ENCODE measurements at regions of chr13 and their contacts with region 1.

Region 1: GRCh38 chr13:30617315-30618185 is at the start of gene USPL1:
- DNase-seq: peak; percentile 92 to 99 (median 99)
- ATAC-seq: peak; percentile 95
- H3K4me3 ChIP-seq: peak within 1 kb of the TSS; percentile 84
- H3K4me3 Mint-ChIP-seq: no peak within 1 kb of the TSS
- H3K27ac ChIP-seq: peak within 1 kb of the TSS; percentile 97
- H3K27ac Mint-ChIP-seq: no peak within 1 kb of the TSS
- H3K4me1 ChIP-seq: peaks cover 11 to 13% of the 10 kb centered on the region in 2 donors
- H3K4me1 Mint-ChIP-seq: peaks cover 13 to 53% (median 36%) of the 10 kb centered on the region in 7 donors
- H3K27me3 ChIP-seq: no peaks in the 10 kb centered on the region
- H3K27me3 Mint-ChIP-seq: no peaks in the 10 kb centered on the region
- total RNA-seq, gene USPL1: 22.4 to 34.7 (median 30.4) TPM

Region 2: GRCh38 chr13:29595380-29596063 is 1022.0 kb before region 1 on chr13 and contains the start of gene SLC7A1:
- CTCF ChIA-PET with region 1: no interaction called
- POLR2A ChIA-PET with region 1: no interaction called
- intact Hi-C with region 1: loop called (anchors 1 kb)
- DNase-seq: peak; percentile 74 to 93 (median 85)
- ATAC-seq: peak; percentile 95
- H3K4me3 ChIP-seq: peak within 1 kb of the TSS; percentile 73
- H3K4me3 Mint-ChIP-seq: peak within 1 kb of the TSS; percentile 88 to 94 (median 90)
- H3K27ac ChIP-seq: peak within 1 kb of the TSS; percentile 82
- H3K27ac Mint-ChIP-seq: peak within 1 kb of the TSS; percentile 74 to 96 (median 87)
- H3K4me1 ChIP-seq: peaks cover 6 to 7% of the 10 kb centered on the region in 2 donors
- H3K4me1 Mint-ChIP-seq: peaks cover 26 to 49% (median 43%) of the 10 kb centered on the region in 7 donors
- H3K27me3 ChIP-seq: no peaks in the 10 kb centered on the region
- H3K27me3 Mint-ChIP-seq: peaks cover 0 to 3% (median 2%) of the 10 kb centered on the region in 5 donors
- total RNA-seq, gene SLC7A1: 12.2 to 63.8 (median 28.2) TPM

Region 3: DNA sequence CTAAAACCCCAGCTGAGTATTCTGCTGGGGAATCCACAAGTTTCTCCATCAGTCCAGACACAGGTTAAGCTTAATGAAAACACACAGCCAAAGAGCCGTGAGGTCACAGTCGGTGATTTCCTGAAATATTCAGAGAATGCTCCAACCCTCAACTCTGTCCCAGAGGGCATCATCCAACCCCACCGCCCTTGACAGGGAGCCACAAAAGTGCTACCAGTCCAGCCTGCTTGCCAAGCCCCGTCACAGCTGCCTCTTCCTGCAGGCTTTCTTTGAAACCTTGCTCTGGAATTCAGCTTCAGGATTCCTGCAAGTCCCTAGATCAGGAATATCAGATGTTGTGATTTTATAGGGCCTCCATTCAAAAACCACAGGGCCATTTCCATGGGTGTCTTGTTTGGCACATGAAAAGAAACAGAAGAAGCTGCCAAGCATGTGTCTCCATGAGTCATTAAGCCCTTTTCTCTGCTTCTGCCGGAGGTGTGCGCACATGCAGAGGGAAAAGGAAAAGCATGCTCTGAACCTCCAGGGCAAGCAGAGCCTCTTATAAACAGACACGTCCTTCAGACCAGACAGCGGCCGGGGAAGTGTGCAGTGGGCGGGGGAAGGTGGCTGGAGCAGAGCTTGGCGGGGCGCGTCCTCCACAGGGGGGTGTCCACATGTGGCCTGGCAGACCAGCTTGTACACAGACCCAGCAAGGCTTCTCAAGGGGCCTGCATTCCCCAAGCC is 474.9 kb before region 1 on chr13:
- CTCF ChIA-PET with region 1: no interaction called
- POLR2A ChIA-PET with region 1: interaction called, 8 read pairs
- intact Hi-C with region 1: loop called in 1 of 2 experiments (anchors 5 kb)
- DNase-seq: peak in 1 of 9 donors; percentile 49
- ATAC-seq: peak; percentile 41
- H3K4me3 ChIP-seq: no peak overlapping the region
- H3K4me3 Mint-ChIP-seq: peak overlapping the region in 4 of 10 donors; percentile 10 to 61 (median 29)
- H3K27ac ChIP-seq: no peak overlapping the region
- H3K27ac Mint-ChIP-seq: peak overlapping the region; percentile 45 to 93 (median 76)
- H3K4me1 ChIP-seq: peaks cover 25 to 47% of the 10 kb centered on the region in 2 donors
- H3K4me1 Mint-ChIP-seq: peaks cover 29 to 64% (median 60%) of the 10 kb centered on the region in 7 donors
- H3K27me3 ChIP-seq: no peaks in the 10 kb centered on the region
- H3K27me3 Mint-ChIP-seq: peaks cover 0 to 5% (median 0%) of the 10 kb centered on the region in 5 donors

Region 4: GRCh38 chr13:30408319-30409101 is 209.0 kb before region 1 on chr13:
- CTCF ChIA-PET with region 1: no interaction called
- POLR2A ChIA-PET with region 1: interaction called, 3 read pairs
- intact Hi-C with region 1: loop called in 1 of 2 experiments (anchors 1 kb)
- DNase-seq: peak; percentile 78 to 89 (median 85)
- ATAC-seq: peak; percentile 97
- H3K4me3 ChIP-seq: peak overlapping the region; percentile 44
- H3K4me3 Mint-ChIP-seq: peak overlapping the region; percentile 64 to 78 (median 72)
- H3K27ac ChIP-seq: peak overlapping the region; percentile 52
- H3K27ac Mint-ChIP-seq: peak overlapping the region; percentile 51 to 87 (median 83)
- H3K4me1 ChIP-seq: peaks cover 9 to 14% of the 10 kb centered on the region in 2 donors
- H3K4me1 Mint-ChIP-seq: peaks cover 6 to 46% (median 37%) of the 10 kb centered on the region in 7 donors
- H3K27me3 ChIP-seq: no peaks in the 10 kb centered on the region
- H3K27me3 Mint-ChIP-seq: peaks cover 0 to 12% (median 0%) of the 10 kb centered on the region in 5 donors

Region 5: DNA sequence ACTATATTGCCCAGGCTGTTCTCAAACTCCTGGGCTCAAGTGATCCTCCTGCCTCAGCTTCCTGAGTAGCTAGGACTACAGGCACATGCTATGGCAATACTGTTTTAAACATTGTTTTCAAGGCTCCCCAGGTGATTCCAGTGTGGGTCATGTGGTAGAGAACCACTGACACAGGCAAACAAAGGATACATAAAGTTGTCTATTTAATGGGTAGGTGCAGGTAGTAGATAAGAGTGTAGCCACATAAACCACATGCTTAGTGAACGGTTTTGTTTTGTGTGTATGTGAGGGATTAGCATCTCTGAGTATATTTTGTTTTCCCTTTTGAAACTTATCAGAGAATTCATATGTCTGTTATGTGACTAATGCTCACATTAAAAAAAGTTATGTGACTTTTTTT is 36.9 kb after region 1 on chr13:
- CTCF ChIA-PET with region 1: no interaction called
- POLR2A ChIA-PET with region 1: no interaction called
- intact Hi-C with region 1: loop called in 1 of 2 experiments (anchors 1 kb)
- DNase-seq: no peak
- ATAC-seq: peak; percentile 76
- H3K4me3 ChIP-seq: no peak overlapping the region
- H3K4me3 Mint-ChIP-seq: peak overlapping the region in 2 of 10 donors; percentile 6 to 82
- H3K27ac ChIP-seq: no peak overlapping the region
- H3K27ac Mint-ChIP-seq: peak overlapping the region in 8 of 9 donors; percentile 17 to 93 (median 57)
- H3K4me1 ChIP-seq: peaks cover 0 to 8% of the 10 kb centered on the region in 2 donors
- H3K4me1 Mint-ChIP-seq: peaks cover 7 to 44% (median 37%) of the 10 kb centered on the region in 7 donors
- H3K27me3 ChIP-seq: no peaks in the 10 kb centered on the region
- H3K27me3 Mint-ChIP-seq: no peaks in the 10 kb centered on the region

Region 6: GRCh38 chr13:31044377-31045285 is 427.1 kb after region 1 on chr13:
- CTCF ChIA-PET with region 1: no interaction called
- POLR2A ChIA-PET with region 1: no interaction called
- intact Hi-C with region 1: loop called in 1 of 2 experiments (anchors 10 kb)
- DNase-seq: peak; percentile 54 to 79 (median 75)
- ATAC-seq: peak; percentile 95
- H3K4me3 ChIP-seq: no peak overlapping the region
- H3K4me3 Mint-ChIP-seq: peak overlapping the region in 9 of 10 donors; percentile 19 to 81 (median 52)
- H3K27ac ChIP-seq: no peak overlapping the region
- H3K27ac Mint-ChIP-seq: peak overlapping the region in 5 of 9 donors; percentile 7 to 90 (median 46)
- H3K4me1 ChIP-seq: peaks cover 22 to 30% of the 10 kb centered on the region in 2 donors
- H3K4me1 Mint-ChIP-seq: peaks cover 22 to 52% (median 40%) of the 10 kb centered on the region in 7 donors
- H3K27me3 ChIP-seq: no peaks in the 10 kb centered on the region
- H3K27me3 Mint-ChIP-seq: peaks cover 0 to 24% (median 5%) of the 10 kb centered on the region in 5 donors

Measured in naive thymus-derived CD4-positive, alpha-beta T cell (primary cell).